Dorsolateral prefrontal cortex (tissue), 120 donors: ENCODE measurements at regions of chr19 and their contacts with region 1.

Region 1: GRCh38 chr19:5719961-5720790 is at the starts of genes CATSPERD and LONP1:
- DNase-seq: peak; percentile 97 to 98 (median 98)
- H3K4me3 ChIP-seq: peak within 1 kb of the TSS; percentile 63 to 100 (median 98)
- H3K27ac ChIP-seq: peak within 1 kb of the TSS; percentile 80 to 100 (median 97)
- H3K27me3 ChIP-seq: no peaks in the 10 kb centered on the region
- CTCF ChIP-seq: peak; percentile 68 to 97 (median 90)
- total RNA-seq, gene CATSPERD: not detected
- total RNA-seq, gene LONP1: 64.2 to 132 (median 86.5) TPM

Region 2: DNA sequence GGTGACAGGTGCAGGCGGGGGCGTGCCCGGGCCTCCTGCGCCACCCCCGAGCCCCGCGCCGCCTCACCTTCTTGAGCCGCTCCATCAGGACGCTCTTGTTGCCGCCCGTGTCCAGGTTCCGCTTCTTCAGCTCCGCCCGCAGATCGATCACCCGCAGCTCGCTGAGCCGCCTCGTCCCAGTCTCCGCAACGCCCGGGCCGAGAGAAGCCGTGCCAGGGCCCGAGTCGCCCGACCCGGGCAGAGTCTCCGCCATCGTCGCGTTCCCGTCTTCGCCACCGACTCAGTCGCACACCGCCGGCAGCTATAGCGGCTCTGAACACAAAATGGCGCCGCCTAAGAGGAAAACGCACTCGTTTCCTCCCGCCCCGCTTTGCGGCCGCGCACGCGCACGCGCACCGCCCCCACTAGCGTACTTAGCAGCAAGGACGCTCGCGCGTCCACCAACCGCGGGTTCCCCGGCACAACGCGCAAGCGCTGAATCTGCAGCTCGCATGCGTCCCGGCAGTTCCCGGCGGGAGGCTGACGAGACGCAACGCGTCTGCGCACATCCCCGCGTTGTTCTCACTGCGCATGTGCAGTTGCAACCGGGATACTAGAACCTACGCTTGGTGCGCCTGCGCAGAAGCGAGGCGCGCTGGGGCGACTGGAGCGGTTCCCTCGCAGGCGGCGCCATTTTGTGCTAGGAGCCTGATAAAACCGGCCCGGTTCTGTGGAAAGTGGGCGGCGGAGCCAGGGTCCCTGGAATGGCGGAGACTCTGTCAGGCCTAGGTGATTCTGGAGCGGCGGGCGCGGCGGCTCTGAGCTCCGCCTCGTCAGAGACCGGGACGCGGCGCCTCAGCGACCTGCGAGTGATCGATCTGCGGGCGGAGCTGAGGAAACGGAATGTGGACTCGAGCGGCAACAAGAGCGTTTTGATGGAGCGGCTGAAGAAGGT is 97.4 kb before region 1 on chr19 and contains the starts of genes SAFB and SAFB2:
- intact Hi-C with region 1: loop called in 1 of 2 experiments (anchors 5 kb)
- DNase-seq: peak; percentile 96 to 99 (median 97)
- H3K4me3 ChIP-seq: peak within 1 kb of the TSS; percentile 77 to 100 (median 98)
- H3K27ac ChIP-seq: peak within 1 kb of the TSS; percentile 80 to 99 (median 96)
- H3K27me3 ChIP-seq: no peaks in the 10 kb centered on the region
- CTCF ChIP-seq: peak in 30 of 56 donors; percentile 7 to 60 (median 32)
- total RNA-seq, gene SAFB: 102 to 184 (median 133) TPM
- total RNA-seq, gene SAFB2: 117 to 326 (median 190) TPM

Region 3: DNA sequence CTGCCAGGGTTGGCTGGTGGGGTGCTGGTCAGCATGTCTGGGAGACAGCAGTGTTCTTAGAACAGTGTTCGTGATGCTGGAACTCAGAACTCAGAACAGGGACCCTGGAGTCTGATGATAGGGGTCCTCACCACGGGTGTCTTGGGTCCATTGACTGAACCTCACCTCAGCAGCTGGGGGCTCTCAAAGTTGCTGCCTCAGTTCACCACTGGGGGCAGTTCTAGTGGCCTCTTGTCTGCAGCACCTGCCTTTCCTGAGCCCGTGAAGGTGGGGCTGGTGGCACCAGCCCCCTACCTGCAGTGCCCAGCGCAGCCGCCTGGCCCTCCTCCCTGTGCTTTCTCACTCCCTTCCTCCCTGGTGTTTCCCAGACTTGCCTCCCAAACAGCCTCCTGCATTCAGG is 68.8 kb before region 1 on chr19:
- intact Hi-C with region 1: no loop called
- DNase-seq: peak in 2 of 10 donors; percentile 10 to 22
- H3K4me3 ChIP-seq: no peak overlapping the region
- H3K27ac ChIP-seq: peak overlapping the region in 1 of 59 donors; percentile 21
- H3K27me3 ChIP-seq: no peaks in the 10 kb centered on the region
- CTCF ChIP-seq: peak in 1 of 56 donors; percentile 9

Region 4: GRCh38 chr19:5680437-5681368 is 39.5 kb before region 1 on chr19 and contains the starts of genes HSD11B1L and MICOS13:
- intact Hi-C with region 1: loop called (anchors 1 to 5 kb)
- DNase-seq: peak; percentile 99 to 100 (median 99)
- H3K4me3 ChIP-seq: peak within 1 kb of the TSS; percentile 64 to 100 (median 91)
- H3K27ac ChIP-seq: peak within 1 kb of the TSS; percentile 80 to 99 (median 96)
- H3K27me3 ChIP-seq: no peaks in the 10 kb centered on the region
- CTCF ChIP-seq: peak in 36 of 56 donors; percentile 3 to 54 (median 35)
- total RNA-seq, gene HSD11B1L: 20.4 to 80.3 (median 55.4) TPM
- total RNA-seq, gene MICOS13: 42.0 to 91.5 (median 69.5) TPM

Region 5: GRCh38 chr19:5690125-5690954 is 29.8 kb before region 1 on chr19 and contains the start of gene RPL36:
- intact Hi-C with region 1: loop called (anchors 2 to 5 kb)
- DNase-seq: peak; percentile 92 to 97 (median 95)
- H3K4me3 ChIP-seq: peak within 1 kb of the TSS; percentile 59 to 92 (median 77)
- H3K27ac ChIP-seq: peak within 1 kb of the TSS; percentile 27 to 95 (median 86)
- H3K27me3 ChIP-seq: no peaks in the 10 kb centered on the region
- CTCF ChIP-seq: peak; percentile 90 to 99 (median 97)
- total RNA-seq, gene RPL36: 215 to 431 (median 280) TPM

Region 6: GRCh38 chr19:5743630-5744029 is 23.5 kb after region 1 on chr19:
- intact Hi-C with region 1: no loop called
- DNase-seq: no peak
- H3K4me3 ChIP-seq: no peak overlapping the region
- H3K27ac ChIP-seq: no peak overlapping the region
- H3K27me3 ChIP-seq: peaks cover 0 to 8% (median 0%) of the 10 kb centered on the region in 45 donors
- CTCF ChIP-seq: no peak

Region 7: DNA sequence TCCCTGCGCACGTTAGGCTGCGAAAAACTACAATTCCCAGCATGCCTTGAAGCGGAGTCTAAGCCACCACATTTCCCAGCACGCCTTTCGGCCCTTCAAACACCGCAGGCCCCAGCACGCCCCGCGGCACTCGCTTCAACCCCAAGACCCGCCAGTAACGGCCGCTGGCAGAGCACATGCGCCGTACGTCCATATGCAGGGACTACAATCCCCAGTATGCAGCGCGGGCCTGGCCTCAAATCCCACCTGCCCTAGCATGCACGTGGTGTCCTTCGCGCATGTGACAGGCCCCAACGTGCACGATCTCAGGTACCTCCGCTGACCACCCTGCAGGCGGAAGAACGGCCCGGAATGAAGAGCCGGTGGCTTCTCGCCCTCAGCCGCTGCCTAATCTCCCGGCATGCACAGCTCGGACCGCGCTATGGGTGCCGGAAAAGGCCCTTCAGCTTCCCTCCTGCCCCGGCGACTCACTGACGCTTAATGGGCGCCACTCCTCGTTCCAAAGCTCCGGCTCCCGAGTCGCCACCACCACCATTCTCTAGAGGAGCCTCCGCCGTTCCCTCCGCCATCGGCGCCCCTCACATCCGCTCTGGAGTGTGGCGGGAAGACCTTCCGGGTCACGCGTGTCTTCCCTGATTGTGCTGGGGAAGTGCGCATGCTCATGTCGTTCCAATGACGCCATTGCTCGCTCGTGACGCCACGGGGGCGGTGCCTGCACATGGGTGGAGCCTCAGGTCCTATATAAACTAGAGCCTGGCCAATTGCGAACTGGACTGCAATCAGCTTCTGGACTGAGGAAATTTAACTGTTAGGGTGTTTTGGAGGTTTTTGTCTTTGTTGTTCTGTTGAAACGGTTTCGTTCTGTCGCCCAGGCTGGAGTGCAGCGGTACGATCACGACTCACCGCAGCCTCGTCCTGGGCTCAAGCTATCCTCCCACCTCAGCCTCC is 70.7 kb after region 1 on chr19 and contains the start of gene DUS3L:
- intact Hi-C with region 1: loop called (anchors 1 to 5 kb)
- DNase-seq: peak; percentile 95 to 98 (median 97)
- H3K4me3 ChIP-seq: peak within 1 kb of the TSS; percentile 69 to 100 (median 93)
- H3K27ac ChIP-seq: peak within 1 kb of the TSS; percentile 70 to 100 (median 98)
- H3K27me3 ChIP-seq: no peaks in the 10 kb centered on the region
- CTCF ChIP-seq: peak in 17 of 56 donors; percentile 3 to 35 (median 18)
- total RNA-seq, gene DUS3L: 12.7 to 37.4 (median 23.8) TPM

Region 8: DNA sequence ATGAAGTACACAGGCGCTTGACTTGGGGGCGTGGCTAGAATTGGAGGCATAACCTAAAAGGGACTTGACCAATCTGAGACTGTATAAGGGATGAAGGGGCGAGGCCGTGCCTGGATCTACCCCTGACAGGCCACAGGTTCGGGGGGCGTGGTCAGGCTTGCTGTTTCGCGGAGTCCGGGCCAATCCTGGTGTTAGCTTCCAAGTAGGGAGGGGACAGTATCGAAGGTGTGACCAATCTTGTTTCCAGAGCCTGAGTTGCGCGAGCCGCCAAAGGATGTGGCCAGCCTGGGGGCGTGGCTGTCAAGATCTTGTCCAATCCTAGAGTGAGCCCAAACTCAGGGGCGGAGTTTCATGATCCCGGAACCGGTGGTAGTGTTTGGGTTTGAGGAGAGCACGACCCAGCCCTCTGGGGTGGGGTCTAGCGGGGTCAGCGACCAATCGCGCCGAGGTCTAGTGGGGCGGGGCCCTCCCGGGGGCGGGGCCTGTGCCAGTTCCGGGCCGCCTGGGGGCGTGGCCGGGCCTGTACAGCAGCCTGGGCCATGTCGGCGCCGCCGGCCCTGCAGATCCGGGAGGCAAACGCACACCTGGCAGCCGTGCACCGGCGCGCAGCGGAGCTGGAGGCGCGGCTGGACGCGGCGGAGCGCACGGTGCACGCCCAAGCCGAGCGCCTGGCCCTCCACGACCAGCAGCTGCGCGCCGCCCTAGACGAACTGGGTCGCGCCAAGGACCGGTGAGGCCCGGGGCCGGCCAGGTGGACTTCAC is 184.4 kb after region 1 on chr19 and contains the start of gene VMAC:
- intact Hi-C with region 1: loop called in 1 of 2 experiments (anchors 10 kb)
- DNase-seq: peak; percentile 97 to 100 (median 100)
- H3K4me3 ChIP-seq: peak within 1 kb of the TSS; percentile 69 to 100 (median 94)
- H3K27ac ChIP-seq: peak within 1 kb of the TSS; percentile 36 to 94 (median 86)
- H3K27me3 ChIP-seq: no peaks in the 10 kb centered on the region
- CTCF ChIP-seq: peak in 25 of 56 donors; percentile 4 to 49 (median 21)
- total RNA-seq, gene VMAC: 3.0 to 14.3 (median 7.2) TPM

Region 9: GRCh38 chr19:6014551-6015135 is 294.5 kb after region 1 on chr19:
- intact Hi-C with region 1: no loop called
- DNase-seq: peak in 2 of 10 donors; percentile 1 to 25
- H3K4me3 ChIP-seq: no peak overlapping the region
- H3K27ac ChIP-seq: no peak overlapping the region
- H3K27me3 ChIP-seq: no peaks in the 10 kb centered on the region
- CTCF ChIP-seq: no peak